ENCODE measurements at regions of chr19 and their contacts with region 1.

Region 1: DNA sequence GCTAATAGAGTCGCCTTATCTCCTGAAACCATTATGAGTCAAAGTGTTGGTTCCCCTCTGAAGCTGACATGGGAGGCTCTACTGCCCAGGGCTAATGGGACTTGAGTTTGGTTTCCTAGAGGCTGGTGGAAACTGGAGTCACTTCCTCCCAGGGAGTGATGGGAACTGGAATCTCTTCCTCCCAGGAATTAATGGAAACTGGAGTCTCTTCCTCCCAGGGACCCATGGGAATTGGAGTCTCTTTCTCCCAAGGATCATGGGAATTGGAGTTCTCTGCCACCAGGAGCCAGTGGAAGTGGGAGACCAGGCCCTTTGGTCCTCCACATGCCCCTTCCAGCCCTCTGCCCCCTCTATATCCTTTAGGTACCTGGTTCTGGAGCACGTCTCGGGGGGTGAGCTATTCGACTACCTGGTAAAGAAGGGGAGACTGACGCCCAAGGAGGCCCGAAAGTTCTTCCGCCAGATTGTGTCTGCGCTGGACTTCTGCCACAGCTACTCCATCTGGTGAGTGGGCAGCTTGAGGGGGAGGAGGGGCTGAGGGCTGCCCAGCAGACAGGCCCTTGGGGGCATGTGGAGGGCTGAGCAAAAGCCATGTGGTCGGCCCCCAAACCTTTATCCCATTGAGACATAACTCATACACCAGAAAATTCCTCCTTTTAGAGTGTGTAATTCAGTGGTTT is 5.5 kb downstream of the BRSK1 start:
- DNase-seq: no peak
- ATAC-seq: no peak
- H3K4me3 ChIP-seq: no peak overlapping the region
- H3K27ac ChIP-seq: no peak overlapping the region
- H3K4me1 ChIP-seq: peaks cover 25% of the 10 kb centered on the region
- H3K27me3 ChIP-seq: peaks cover 0 to 21% of the 10 kb centered on the region in 2 experiments
- CTCF ChIP-seq: no peak
- EP300 ChIP-seq: no peak
- POLR2A ChIP-seq: no peak
- RAD21 ChIP-seq: no peak

Region 2: GRCh38 chr19:55312621-55313512 is 23.6 kb after region 1 on chr19:
- CTCF ChIA-PET with region 1: no interaction called
- POLR2A ChIA-PET with region 1: no interaction called
- in situ Hi-C with region 1: no loop called
- intact Hi-C with region 1: no loop called
- DNase-seq: no peak
- ATAC-seq: no peak; the same call in 1 of the 3 replicates
- H3K4me3 ChIP-seq: no peak overlapping the region
- H3K27ac ChIP-seq: no peak overlapping the region
- H3K4me1 ChIP-seq: peaks cover 14% of the 10 kb centered on the region
- H3K27me3 ChIP-seq: peaks cover 0 to 5% of the 10 kb centered on the region in 2 experiments; a peak in 1 of 5 replicates
- CTCF ChIP-seq: no peak
- EP300 ChIP-seq: no peak
- POLR2A ChIP-seq: no peak
- RAD21 ChIP-seq: no peak

Region 3: GRCh38 chr19:55418185-55418584 is 128.9 kb after region 1 on chr19:
- CTCF ChIA-PET with region 1: interaction called, 23 read pairs
- POLR2A ChIA-PET with region 1: interaction called, 3 read pairs
- in situ Hi-C with region 1: no loop called
- intact Hi-C with region 1: loop called (anchors 1 kb)
- DNase-seq: peak; percentile 70
- ATAC-seq: peak; percentile 92
- H3K4me3 ChIP-seq: no peak overlapping the region
- H3K27ac ChIP-seq: no peak overlapping the region
- H3K4me1 ChIP-seq: peaks cover 10% of the 10 kb centered on the region
- H3K27me3 ChIP-seq: peaks cover 0 to 11% of the 10 kb centered on the region in 2 experiments; a peak in 1 of 5 replicates
- CTCF ChIP-seq: peak; percentile 93
- EP300 ChIP-seq: no peak
- POLR2A ChIP-seq: no peak
- RAD21 ChIP-seq: peak; percentile 84